H1 (cell line): ENCODE measurements at regions of chr2 and their contacts with region 1.

Region 1: DNA sequence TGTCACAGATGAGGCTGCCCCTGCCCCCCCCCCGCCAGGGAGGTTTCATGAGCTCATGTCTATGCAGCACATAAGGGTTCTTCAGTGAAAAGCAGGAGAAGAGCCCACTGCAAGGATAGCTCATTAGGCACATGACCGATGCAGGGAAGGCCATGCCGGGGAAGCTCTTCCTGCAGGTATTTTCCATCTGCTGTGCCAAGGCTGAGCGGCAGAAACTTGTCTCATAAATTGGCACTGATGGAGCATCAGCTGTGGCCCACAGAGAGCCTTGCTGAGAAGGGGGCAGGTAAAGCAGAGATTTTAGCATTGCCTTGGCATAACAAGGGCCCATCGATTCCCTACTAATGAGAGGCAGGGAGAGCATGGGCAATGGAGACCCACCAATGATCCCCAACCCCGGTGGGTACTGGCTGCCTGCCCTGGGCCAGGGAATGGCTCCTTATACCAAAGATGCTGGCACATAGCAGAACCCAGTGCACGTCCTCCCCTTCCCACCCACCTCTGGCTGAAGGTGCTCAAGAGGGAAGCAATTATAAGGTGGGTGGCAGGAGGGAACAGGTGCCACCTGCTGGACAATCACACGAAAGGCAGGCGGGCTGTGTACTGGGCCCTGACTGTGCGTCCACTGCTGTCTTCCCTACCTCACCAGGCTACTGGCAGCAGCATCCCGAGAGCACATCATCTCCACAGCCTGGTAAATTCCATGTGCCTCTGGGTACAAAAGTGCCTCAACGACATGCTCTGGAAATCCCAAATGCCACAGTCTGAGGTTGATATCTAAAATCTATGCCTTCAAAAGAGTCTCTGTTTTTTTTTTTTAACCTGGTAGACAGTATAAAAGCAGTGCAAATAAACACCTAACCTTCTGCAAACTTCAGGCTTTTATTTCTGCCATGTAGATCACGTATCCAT is 41.4 kb downstream of the STEAP3 start:
- DNase-seq: peak in 1 of 2 experiments; percentile 81
- H3K4me3 ChIP-seq: no peak overlapping the region
- H3K27ac ChIP-seq: no peak overlapping the region
- H3K4me1 ChIP-seq: no peaks in the 10 kb centered on the region; a peak in 1 of 7 replicates
- H3K27me3 ChIP-seq: no peaks in the 10 kb centered on the region; a peak in 1 of 7 replicates
- CTCF ChIP-seq: peak; percentile 82 to 99 (median 98)
- EP300 ChIP-seq: no peak
- POLR2A ChIP-seq: no peak
- RAD21 ChIP-seq: peak; percentile 87 to 89

Region 2: DNA sequence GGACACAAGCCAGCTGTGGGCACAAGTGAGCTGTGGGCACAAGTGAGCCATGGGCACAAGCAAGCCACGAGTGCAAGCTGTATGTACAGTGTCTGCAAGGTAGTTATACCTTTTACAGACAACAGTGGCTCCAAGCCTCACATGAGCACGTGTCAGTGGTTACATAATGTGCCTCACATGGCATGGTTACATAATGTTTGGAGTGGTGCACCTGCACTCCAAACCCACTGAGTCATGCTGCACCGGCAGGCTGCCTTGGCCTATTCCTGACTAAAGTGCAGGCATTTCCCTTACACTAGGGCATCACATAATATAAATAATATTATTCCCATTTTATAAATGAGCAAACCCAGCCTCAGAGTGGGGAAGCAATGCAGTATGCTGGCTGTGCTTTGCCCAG is 260.4 kb before region 1 on chr2:
- CTCF ChIA-PET with region 1: no interaction called
- POLR2A ChIA-PET with region 1: no interaction called
- DNase-seq: no peak
- H3K4me3 ChIP-seq: no peak overlapping the region
- H3K27ac ChIP-seq: no peak overlapping the region
- H3K4me1 ChIP-seq: no peaks in the 10 kb centered on the region
- H3K27me3 ChIP-seq: no peaks in the 10 kb centered on the region; a peak in 1 of 7 replicates
- CTCF ChIP-seq: no peak
- EP300 ChIP-seq: no peak
- POLR2A ChIP-seq: no peak
- RAD21 ChIP-seq: no peak

Region 3: GRCh38 chr2:119028327-119029174 is 236.5 kb before region 1 on chr2:
- CTCF ChIA-PET with region 1: interaction called, 31 read pairs
- POLR2A ChIA-PET with region 1: no interaction called
- DNase-seq: peak in 1 of 2 experiments; percentile 84
- H3K4me3 ChIP-seq: no peak overlapping the region
- H3K27ac ChIP-seq: no peak overlapping the region
- H3K4me1 ChIP-seq: no peaks in the 10 kb centered on the region; a peak in 1 of 7 replicates
- H3K27me3 ChIP-seq: no peaks in the 10 kb centered on the region
- CTCF ChIP-seq: peak; percentile 59 to 78 (median 62)
- EP300 ChIP-seq: no peak
- POLR2A ChIP-seq: no peak
- RAD21 ChIP-seq: peak; percentile 66 to 81

Region 4: GRCh38 chr2:119218478-119219064 is 46.5 kb before region 1 on chr2:
- CTCF ChIA-PET with region 1: interaction called, 18 read pairs
- POLR2A ChIA-PET with region 1: interaction called, 3 read pairs
- DNase-seq: no peak
- H3K4me3 ChIP-seq: no peak overlapping the region
- H3K27ac ChIP-seq: 0 out of 2 replicates have a peak overlapping the region, but pooled peaks have one; percentile 10
- H3K4me1 ChIP-seq: peaks cover 6 to 28% (median 18%) of the 10 kb centered on the region in 4 experiments
- H3K27me3 ChIP-seq: peaks cover 0 to 3% (median 1%) of the 10 kb centered on the region in 4 experiments; a peak in 3 of 7 replicates
- CTCF ChIP-seq: peak; percentile 46 to 59 (median 52)
- EP300 ChIP-seq: no peak
- POLR2A ChIP-seq: no peak
- RAD21 ChIP-seq: peak; percentile 77 to 84

Region 5: GRCh38 chr2:119240311-119241202 is 24.5 kb before region 1 on chr2:
- CTCF ChIA-PET with region 1: interaction called, 57 read pairs
- POLR2A ChIA-PET with region 1: no interaction called
- DNase-seq: no peak
- H3K4me3 ChIP-seq: no peak overlapping the region
- H3K27ac ChIP-seq: peak overlapping the region; percentile 40; the same call in 1 of the 2 replicates
- H3K4me1 ChIP-seq: peaks cover 6 to 22% (median 14%) of the 10 kb centered on the region in 4 experiments
- H3K27me3 ChIP-seq: no peaks in the 10 kb centered on the region
- CTCF ChIP-seq: no peak
- EP300 ChIP-seq: no peak
- POLR2A ChIP-seq: no peak
- RAD21 ChIP-seq: no peak

Region 6: GRCh38 chr2:119290859-119291587 is 26.0 kb after region 1 on chr2:
- CTCF ChIA-PET with region 1: interaction called, 11 read pairs
- POLR2A ChIA-PET with region 1: no interaction called
- DNase-seq: peak; percentile 66 to 89
- H3K4me3 ChIP-seq: no peak overlapping the region
- H3K27ac ChIP-seq: no peak overlapping the region
- H3K4me1 ChIP-seq: peaks cover 0 to 2% (median 0%) of the 10 kb centered on the region in 4 experiments; a peak in 2 of 7 replicates
- H3K27me3 ChIP-seq: no peaks in the 10 kb centered on the region
- CTCF ChIP-seq: peak; percentile 92 to 98 (median 98)
- EP300 ChIP-seq: no peak
- POLR2A ChIP-seq: no peak
- RAD21 ChIP-seq: peak; percentile 97 to 99